Thyroid gland (tissue), 4 donors: ENCODE measurements at regions of chr5 and their contacts with region 1.

Region 1: GRCh38 chr5:178732281-178732680 is 1.8 kb upstream of the ZNF354A start:
- DNase-seq: no peak
- H3K4me3 ChIP-seq: no peak overlapping the region
- H3K27ac ChIP-seq: no peak overlapping the region
- H3K4me1 ChIP-seq: no peaks in the 10 kb centered on the region
- H3K27me3 ChIP-seq: no peaks in the 10 kb centered on the region
- CTCF ChIP-seq: no peak
- POLR2A ChIP-seq: no peak

Region 2: GRCh38 chr5:178808886-178809285 is 76.6 kb after region 1 on chr5:
- intact Hi-C with region 1: no loop called
- DNase-seq: no peak
- H3K4me3 ChIP-seq: no peak overlapping the region
- H3K27ac ChIP-seq: no peak overlapping the region
- H3K4me1 ChIP-seq: no peaks in the 10 kb centered on the region
- H3K27me3 ChIP-seq: no peaks in the 10 kb centered on the region
- CTCF ChIP-seq: no peak
- POLR2A ChIP-seq: no peak

Region 3: DNA sequence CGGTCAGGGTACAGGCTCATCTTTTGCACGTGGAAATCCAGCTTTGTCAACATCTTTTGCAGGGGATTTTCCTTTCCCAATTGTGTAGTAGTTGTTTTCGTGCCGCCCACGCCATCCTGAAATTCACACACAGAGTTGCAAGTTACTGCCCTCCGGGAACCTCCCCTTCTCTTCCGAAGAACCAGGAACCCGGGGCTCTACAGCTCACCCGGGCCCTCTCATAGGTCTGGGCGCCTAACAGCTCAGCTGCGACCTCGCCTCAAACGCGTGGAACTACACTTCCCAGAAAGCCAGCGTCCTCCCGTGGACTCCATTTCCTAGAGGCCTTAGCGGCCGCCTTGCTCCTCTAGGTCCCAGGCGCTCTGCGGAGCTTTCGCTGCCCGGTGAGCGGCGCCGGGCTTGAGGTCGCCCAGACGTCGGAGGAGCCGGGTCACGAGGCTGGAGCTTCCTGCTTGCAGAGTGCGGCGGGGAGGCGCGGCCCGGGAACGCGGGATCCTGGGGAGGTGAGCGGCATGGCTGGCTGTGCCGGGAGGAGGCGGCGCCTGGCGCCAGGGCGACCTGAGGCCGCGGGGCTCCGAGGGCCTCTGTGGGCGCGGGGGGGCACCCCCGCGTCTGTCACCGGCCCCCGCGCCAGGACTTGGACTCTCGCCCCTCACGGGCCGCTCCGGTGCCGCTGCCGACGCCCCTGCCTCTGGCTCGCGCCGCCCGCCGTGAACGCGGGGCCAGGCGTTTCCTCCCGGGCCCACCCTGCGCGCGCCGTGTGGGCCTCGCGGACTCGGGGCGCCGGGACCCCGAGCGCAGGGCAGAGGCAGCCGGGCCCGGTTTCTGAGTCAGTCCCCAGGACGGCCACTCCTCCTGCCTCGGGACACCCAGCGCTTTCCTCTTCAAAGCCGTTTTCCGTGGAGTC is 127.6 kb after region 1 on chr5 and contains the start of gene ZNF354B:
- intact Hi-C with region 1: loop called (anchors 5 kb)
- DNase-seq: peak; percentile 90 to 91
- H3K4me3 ChIP-seq: peak within 1 kb of the TSS; percentile 40 to 98 (median 59)
- H3K27ac ChIP-seq: peak within 1 kb of the TSS; percentile 52 to 80 (median 73)
- H3K4me1 ChIP-seq: peaks cover 0 to 7% of the 10 kb centered on the region in 2 donors
- H3K27me3 ChIP-seq: no peaks in the 10 kb centered on the region
- CTCF ChIP-seq: peak in 2 of 6 experiments; percentile 28 to 36
- POLR2A ChIP-seq: peak in 1 of 2 donors; percentile 76
- total RNA-seq, gene ZNF354B: 17.9 to 34.8 (median 31.4) TPM

Region 4: DNA sequence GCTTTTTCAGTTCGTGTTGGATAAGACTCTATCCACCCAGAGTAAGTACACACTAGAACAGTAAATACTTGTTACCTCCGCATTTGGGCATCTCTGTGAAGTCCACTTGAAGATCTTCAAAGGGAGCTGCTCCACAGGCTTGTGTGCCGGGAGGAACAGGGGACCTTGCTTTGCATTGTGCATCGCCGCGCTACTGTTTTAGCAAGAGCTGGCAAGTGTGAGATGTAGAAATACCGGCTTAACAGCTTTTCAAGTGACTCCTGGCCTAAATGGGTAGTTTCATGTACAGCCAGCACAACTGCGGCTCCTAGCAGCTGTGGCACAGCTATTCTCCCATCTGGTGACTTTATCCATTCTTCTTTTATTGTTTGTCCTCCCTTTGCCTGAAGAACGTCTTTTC is 319.5 kb after region 1 on chr5:
- intact Hi-C with region 1: loop called (anchors 10 kb)
- DNase-seq: peak; percentile 56 to 57
- H3K4me3 ChIP-seq: no peak overlapping the region
- H3K27ac ChIP-seq: no peak overlapping the region
- H3K4me1 ChIP-seq: no peaks in the 10 kb centered on the region
- H3K27me3 ChIP-seq: no peaks in the 10 kb centered on the region
- CTCF ChIP-seq: no peak
- POLR2A ChIP-seq: no peak